ENCODE measurements at regions of chr15 and their contacts with region 1.

Region 1: GRCh38 chr15:64387562-64388168 is at the start of gene TRIP4:
- DNase-seq: peak; percentile 98
- total RNA-seq, gene TRIP4: 16.0 TPM

Region 2: GRCh38 chr15:64162870-64163658 is 224.6 kb before region 1 on chr15 and contains the start of gene PPIB:
- intact Hi-C with region 1: loop called (anchors 2 kb)
- DNase-seq: peak; percentile 99
- total RNA-seq, gene PPIB: 121 TPM

Region 3: GRCh38 chr15:64315136-64315660 is 72.5 kb before region 1 on chr15:
- intact Hi-C with region 1: no loop called
- DNase-seq: no peak

Region 4: DNA sequence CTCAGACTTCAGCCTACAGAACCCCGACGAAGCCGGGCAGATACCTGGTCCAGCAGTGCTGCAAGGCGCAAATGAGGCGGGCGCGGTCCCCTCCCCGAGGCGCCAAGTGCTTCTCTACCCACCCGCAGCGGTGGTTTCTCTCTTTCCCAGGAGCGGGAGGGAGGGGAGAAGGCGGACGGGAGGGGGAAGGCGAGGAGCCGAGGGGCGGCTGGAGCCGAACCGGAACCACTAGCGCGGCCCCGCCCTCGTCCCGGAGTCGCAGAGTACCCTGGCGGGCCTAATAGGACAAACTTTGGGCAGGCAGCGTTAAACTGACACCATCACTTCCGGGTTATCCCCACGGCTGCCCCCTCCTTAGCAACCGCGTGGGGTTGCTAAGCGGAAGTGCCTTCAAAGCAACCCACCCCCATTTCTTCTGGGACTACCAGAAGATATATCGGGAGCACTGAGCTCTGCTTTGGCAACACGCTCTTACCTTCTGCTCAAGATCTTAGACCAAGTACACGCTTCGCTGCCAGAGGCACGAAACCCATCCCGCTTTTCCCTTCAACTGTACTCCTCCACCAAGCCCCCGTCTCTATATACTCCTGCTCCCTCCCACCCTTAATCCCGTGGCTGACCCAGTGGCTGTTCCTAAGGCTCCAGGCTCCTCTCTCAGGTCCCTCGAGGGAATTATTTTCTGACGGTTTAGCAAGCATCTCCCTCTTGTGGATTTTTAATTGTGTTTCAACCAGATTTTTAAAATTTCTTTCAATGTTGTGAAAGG is 31.5 kb before region 1 on chr15 and contains the start of gene CSNK1G1:
- intact Hi-C with region 1: loop called (anchors 1 kb)
- DNase-seq: peak; percentile 96
- total RNA-seq, gene CSNK1G1: 8.3 TPM

Region 5: GRCh38 chr15:64460206-64460734 is 72.6 kb after region 1 on chr15 and contains the start of gene ZNF609:
- intact Hi-C with region 1: loop called (anchors 1 kb)
- DNase-seq: peak; percentile 96
- total RNA-seq, gene ZNF609: 15.3 TPM

Region 6: GRCh38 chr15:64586259-64586870 is 198.7 kb after region 1 on chr15:
- intact Hi-C with region 1: no loop called
- DNase-seq: no peak